ENCODE measurements at regions of chr9 and their contacts with region 1.

Region 1: GRCh38 chr9:112112941-112113681 is 62.0 kb downstream of the SUSD1 start:
- DNase-seq: peak; percentile 51 to 71
- ATAC-seq: peak; percentile 88 to 94
- H3K4me3 ChIP-seq: no peak overlapping the region
- H3K27ac ChIP-seq: peak overlapping the region; percentile 74 to 95; a peak in 5 of 6 replicates
- H3K4me1 ChIP-seq: peaks cover 80% of the 10 kb centered on the region
- CTCF ChIP-seq: peak; percentile 83
- EP300 ChIP-seq: no peak
- POLR2A ChIP-seq: no peak
- RAD21 ChIP-seq: peak; percentile 92 to 95

Region 2: DNA sequence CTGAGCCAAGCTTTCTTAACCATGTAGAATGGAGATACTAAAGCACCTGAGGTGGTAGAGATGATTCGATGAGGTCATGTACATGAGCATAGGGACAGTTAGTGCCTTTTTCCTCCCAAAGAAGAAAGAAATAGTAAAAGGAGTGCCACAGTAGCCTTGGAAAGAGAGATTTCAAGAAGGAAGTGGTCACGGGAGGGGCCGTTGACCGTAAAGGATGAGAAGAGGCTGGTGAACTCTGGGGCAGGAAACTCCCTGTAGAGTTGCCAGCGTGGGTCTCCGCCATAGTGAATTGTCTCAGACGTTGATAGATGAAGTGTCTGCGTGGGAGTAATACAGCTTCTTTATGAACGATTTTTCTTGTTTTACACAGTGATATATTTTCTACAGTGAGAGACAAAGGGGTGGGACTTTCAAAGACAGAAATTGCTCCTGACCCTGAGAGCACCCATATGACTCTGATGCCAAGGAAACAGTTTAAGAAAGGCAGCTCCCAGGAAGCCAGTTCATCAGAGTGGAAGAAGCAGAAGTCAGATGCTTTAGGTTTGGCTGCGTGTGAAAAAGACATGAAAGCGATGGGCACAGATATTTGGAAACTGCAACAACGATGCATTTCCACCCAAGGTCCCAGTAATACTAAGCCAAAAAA is 175.2 kb before region 1 on chr9:
- CTCF ChIA-PET with region 1: no interaction called
- POLR2A ChIA-PET with region 1: no interaction called
- DNase-seq: no peak
- ATAC-seq: peak; percentile 30 to 33; a peak in 5 of 6 replicates
- H3K4me3 ChIP-seq: no peak overlapping the region
- H3K27ac ChIP-seq: no peak overlapping the region
- H3K4me1 ChIP-seq: no peaks in the 10 kb centered on the region
- CTCF ChIP-seq: no peak
- EP300 ChIP-seq: no peak
- POLR2A ChIP-seq: no peak
- RAD21 ChIP-seq: no peak

Region 3: GRCh38 chr9:111952559-111952958 is 160.6 kb before region 1 on chr9:
- CTCF ChIA-PET with region 1: no interaction called
- POLR2A ChIA-PET with region 1: no interaction called
- DNase-seq: no peak
- ATAC-seq: no peak
- H3K4me3 ChIP-seq: no peak overlapping the region
- H3K27ac ChIP-seq: no peak overlapping the region
- H3K4me1 ChIP-seq: peaks cover 3% of the 10 kb centered on the region; the same call in 1 of the 3 replicates
- CTCF ChIP-seq: no peak
- EP300 ChIP-seq: no peak
- POLR2A ChIP-seq: no peak
- RAD21 ChIP-seq: no peak

Region 4: DNA sequence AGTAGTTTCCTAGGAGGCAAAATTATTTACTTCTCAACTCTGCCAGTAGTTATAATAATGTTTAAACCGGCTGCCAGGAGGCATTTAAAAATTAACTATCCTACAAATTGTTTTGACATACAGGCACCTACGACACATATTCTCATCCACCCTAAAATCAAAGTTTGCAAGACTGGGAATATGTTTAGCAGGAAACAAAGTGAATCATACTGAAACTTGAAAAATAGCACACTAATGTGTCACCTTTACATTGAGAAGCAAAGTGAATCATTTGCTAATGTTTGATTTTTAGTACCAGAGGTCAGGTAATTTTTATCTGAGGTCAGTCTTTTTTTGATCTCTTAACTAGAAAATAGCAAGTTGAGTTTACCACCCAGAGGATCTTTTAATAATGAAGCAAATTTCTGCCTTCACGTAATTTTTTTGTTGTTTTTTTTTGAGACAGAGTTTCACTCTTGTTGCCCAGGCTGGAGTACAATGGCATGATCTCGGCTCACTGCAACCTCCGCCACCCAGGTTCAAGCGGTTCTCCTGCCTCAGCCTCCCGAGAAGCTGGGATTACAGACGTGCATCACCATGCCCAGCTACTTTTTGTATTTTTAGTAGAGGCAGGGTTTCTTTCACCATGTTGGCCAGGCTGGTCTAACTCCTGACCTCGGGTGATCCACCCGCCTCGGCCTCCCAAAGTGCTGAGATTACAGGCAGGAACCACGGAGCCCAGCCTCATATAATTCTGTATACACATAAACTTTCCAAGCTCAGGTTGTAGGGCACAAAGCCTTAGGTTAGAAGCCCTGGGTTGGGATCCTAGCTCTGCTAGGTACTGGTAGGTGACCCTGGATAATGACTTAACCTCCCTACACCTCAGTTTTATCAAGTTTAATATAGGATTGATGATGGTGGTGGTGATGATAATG is 92.2 kb before region 1 on chr9:
- CTCF ChIA-PET with region 1: no interaction called
- POLR2A ChIA-PET with region 1: no interaction called
- DNase-seq: peak; percentile 77 to 86
- ATAC-seq: peak; percentile 89 to 96
- H3K4me3 ChIP-seq: no peak overlapping the region
- H3K27ac ChIP-seq: peak overlapping the region; percentile 71 to 89
- H3K4me1 ChIP-seq: peaks cover 24% of the 10 kb centered on the region
- CTCF ChIP-seq: no peak
- EP300 ChIP-seq: peak; percentile 77 to 82; a peak in 4 of 5 replicates
- POLR2A ChIP-seq: no peak
- RAD21 ChIP-seq: peak; percentile 29 to 59; a peak in 4 of 5 replicates

Region 5: GRCh38 chr9:112078432-112078831 is 34.7 kb before region 1 on chr9:
- CTCF ChIA-PET with region 1: no interaction called
- POLR2A ChIA-PET with region 1: no interaction called
- DNase-seq: no peak
- ATAC-seq: no peak
- H3K4me3 ChIP-seq: no peak overlapping the region
- H3K27ac ChIP-seq: no peak overlapping the region
- H3K4me1 ChIP-seq: peaks cover 16% of the 10 kb centered on the region
- CTCF ChIP-seq: no peak
- EP300 ChIP-seq: no peak
- POLR2A ChIP-seq: no peak
- RAD21 ChIP-seq: no peak

Region 6: DNA sequence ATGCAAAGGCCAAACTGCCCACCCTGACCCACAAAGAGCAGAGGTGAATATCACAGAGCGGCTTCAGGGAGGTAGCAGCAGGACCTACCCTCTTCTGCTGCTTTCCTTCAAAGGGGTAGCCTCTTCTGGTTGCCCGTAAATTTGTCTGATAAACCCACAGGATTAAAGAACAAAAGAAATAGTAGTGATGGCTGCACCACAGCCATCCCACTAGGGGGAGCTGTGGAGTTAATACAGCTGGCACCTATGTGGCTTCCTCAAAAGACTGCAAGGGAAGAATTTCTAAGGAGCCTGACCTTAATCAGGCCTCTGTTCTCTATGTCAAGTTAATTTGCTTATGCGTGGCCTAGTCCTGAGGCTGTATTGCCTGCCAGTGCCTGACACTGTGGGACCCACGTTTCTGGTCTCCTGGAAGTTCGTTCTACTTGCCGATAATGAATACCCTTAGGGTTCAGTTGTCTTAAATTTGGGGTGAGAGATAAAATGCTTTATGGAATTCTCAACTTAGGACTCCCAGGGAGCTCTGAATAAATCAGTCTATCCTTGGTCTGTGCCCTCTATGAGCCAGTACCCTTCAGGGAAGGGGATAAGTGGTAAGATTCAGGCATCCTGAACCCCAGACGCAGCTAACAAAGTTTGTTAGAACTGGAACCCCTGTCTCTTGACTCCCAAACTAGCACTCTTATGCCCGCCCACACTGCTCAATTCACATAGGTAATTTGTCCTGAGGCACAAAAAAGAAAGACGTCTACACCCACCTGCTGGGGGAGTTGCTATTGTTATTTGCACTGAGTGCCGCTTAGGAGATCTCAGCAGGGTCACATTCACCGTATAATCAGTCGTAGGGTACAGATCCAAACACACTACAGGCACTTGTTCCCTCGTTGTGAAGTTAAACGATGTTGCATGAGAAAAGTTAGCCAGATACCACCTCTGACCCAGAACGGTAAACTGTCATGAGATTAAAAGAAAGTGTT is 15.1 kb before region 1 on chr9:
- CTCF ChIA-PET with region 1: interaction called, 66 read pairs
- POLR2A ChIA-PET with region 1: no interaction called
- DNase-seq: peak; percentile 72 to 76
- ATAC-seq: peak; percentile 93 to 97
- H3K4me3 ChIP-seq: no peak overlapping the region
- H3K27ac ChIP-seq: peak overlapping the region; percentile 48 to 75; a peak in 4 of 6 replicates
- H3K4me1 ChIP-seq: peaks cover 4% of the 10 kb centered on the region
- CTCF ChIP-seq: peak; percentile 92
- EP300 ChIP-seq: no peak
- POLR2A ChIP-seq: no peak
- RAD21 ChIP-seq: peak; percentile 88 to 93

Region 7: DNA sequence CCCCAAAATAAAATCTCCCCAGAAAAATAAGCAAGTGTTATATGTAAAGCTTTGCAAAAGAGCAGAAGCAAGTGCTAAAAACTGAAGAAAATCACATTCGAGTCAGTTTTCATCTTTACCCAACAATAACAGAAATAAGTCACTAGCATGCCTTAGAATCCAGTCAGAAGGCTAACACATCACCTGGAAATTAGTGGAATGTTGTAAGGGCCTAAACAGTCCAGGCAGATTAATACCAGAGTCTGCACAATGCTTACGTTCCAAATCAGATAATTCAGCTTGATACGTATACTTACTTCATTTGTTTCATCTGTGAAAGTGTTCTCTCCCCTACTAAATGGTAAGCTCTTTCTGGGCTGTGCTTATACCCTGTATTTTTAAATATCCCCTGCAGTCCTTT is 19.2 kb after region 1 on chr9:
- CTCF ChIA-PET with region 1: interaction called, 21 read pairs
- POLR2A ChIA-PET with region 1: no interaction called
- DNase-seq: no peak
- ATAC-seq: no peak
- H3K4me3 ChIP-seq: no peak overlapping the region
- H3K27ac ChIP-seq: 0 out of 6 replicates have a peak overlapping the region, but pooled peaks of 1 of the 2 experiments have one; percentile 8
- H3K4me1 ChIP-seq: peaks cover 38% of the 10 kb centered on the region
- CTCF ChIP-seq: no peak
- EP300 ChIP-seq: no peak
- POLR2A ChIP-seq: no peak
- RAD21 ChIP-seq: no peak

Region 8: DNA sequence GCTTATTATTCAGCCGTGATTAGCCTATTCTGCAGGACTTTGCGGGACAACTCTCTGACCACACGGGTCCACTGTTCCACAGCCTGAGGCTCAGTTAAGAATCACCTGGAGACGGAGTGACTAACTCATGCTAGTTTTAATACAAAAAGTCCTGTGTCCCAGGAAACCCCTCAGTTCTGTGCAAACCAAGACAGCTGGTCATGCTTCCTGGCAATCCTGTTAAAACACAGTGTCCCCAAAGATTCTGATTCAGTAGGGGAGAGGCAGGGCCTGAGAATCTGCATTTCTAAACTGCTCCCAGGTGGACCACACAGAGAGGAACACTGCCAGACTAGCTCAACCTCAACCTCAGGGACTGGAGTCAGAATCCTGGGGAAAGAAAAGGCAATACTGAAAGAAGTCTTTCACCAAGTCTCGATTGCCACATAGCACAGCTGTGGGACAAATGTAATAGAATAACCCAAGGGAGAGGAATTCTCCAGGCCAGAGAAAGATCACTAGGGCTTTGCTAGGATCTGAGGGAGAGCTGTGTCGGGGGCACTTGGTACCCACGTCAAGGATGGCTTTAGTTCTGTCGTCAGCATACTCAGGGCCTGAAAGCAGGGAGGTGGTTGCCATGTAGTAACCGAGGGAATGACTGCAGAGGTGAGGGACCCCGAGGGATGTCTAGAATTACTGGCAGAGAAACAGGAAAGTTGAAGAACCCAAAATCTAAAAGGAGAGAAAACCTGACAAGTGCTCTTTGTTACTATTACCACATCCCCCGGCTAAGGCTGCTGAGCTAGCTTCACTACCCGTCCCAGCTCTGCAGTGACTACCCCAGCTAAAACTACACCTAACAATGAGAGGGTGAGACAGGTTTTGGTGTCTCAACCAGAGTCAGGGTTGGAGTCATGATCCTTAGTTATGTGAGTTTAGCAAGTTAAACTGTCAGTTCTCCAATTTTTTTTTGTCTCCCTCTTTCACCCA is 53.3 kb after region 1 on chr9:
- CTCF ChIA-PET with region 1: interaction called, 13 read pairs
- POLR2A ChIA-PET with region 1: interaction called, 3 read pairs
- DNase-seq: peak; percentile 51 to 59
- ATAC-seq: peak; percentile 83 to 84
- H3K4me3 ChIP-seq: no peak overlapping the region
- H3K27ac ChIP-seq: peak overlapping the region; percentile 66 to 82
- H3K4me1 ChIP-seq: peaks cover 78% of the 10 kb centered on the region
- CTCF ChIP-seq: 0 out of 3 replicates have a peak, but pooled peaks have one; percentile 18
- EP300 ChIP-seq: no peak
- POLR2A ChIP-seq: no peak
- RAD21 ChIP-seq: peak; percentile 41 to 48

Region 9: DNA sequence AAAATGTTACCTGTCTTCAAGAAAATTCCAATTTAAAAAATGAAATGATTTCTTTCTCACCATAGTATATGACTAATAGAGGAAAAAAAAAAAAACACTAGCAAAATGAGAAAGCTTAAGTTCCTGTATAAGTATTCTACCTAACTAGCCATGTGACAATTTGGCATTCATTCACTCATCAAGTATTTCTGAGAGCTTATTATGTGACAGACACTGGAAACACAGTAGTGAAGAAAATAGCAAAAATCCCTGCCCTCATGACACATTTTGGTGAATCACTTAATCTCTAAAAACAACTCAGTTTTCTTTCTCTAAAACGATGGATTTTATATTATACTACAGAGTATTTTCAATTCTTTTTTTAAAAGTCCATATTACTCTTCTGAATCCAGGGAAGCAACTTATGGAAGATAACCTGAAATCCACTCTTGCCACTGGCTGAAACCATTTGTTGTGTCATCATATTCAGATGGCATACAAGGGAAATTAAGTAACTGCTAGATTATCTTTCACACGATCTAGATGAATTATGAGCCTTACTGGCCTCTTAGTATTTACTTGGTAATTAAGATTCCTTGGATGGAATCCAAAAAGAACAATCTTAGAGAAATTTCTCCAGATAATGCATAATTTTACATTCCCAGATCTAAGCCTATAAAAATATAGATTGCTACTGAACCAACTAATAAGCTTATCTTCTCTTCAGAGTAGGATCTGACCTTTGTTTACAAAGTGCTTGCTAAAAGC is 214.8 kb after region 1 on chr9:
- CTCF ChIA-PET with region 1: interaction called, 12 read pairs
- POLR2A ChIA-PET with region 1: interaction called, 19 read pairs
- DNase-seq: no peak
- ATAC-seq: no peak
- H3K4me3 ChIP-seq: no peak overlapping the region
- H3K27ac ChIP-seq: 0 out of 6 replicates have a peak overlapping the region, but pooled peaks of 1 of the 2 experiments have one; percentile 22
- H3K4me1 ChIP-seq: peaks cover 48% of the 10 kb centered on the region
- CTCF ChIP-seq: no peak
- EP300 ChIP-seq: no peak
- POLR2A ChIP-seq: no peak
- RAD21 ChIP-seq: no peak

Region 10: GRCh38 chr9:112355427-112355897 is 242.4 kb after region 1 on chr9:
- CTCF ChIA-PET with region 1: interaction called, 64 read pairs
- POLR2A ChIA-PET with region 1: no interaction called
- DNase-seq: no peak
- ATAC-seq: no peak
- H3K4me3 ChIP-seq: no peak overlapping the region
- H3K27ac ChIP-seq: 0 out of 6 replicates have a peak overlapping the region, but pooled peaks of 1 of the 2 experiments have one; percentile 12
- H3K4me1 ChIP-seq: peaks cover 21% of the 10 kb centered on the region
- CTCF ChIP-seq: no peak
- EP300 ChIP-seq: no peak
- POLR2A ChIP-seq: no peak
- RAD21 ChIP-seq: no peak

Region 11: GRCh38 chr9:112711050-112711689 is 598.1 kb after region 1 on chr9:
- CTCF ChIA-PET with region 1: interaction called, 10 read pairs
- POLR2A ChIA-PET with region 1: no interaction called
- DNase-seq: peak in 1 of 2 experiments; percentile 42
- ATAC-seq: peak in 1 of 2 experiments; percentile 67; a peak in 3 of 6 replicates
- H3K4me3 ChIP-seq: no peak overlapping the region
- H3K27ac ChIP-seq: no peak overlapping the region
- H3K4me1 ChIP-seq: no peaks in the 10 kb centered on the region
- CTCF ChIP-seq: peak; percentile 55
- EP300 ChIP-seq: no peak
- POLR2A ChIP-seq: no peak
- RAD21 ChIP-seq: peak; percentile 55 to 58